GM12878 (cell line): ENCODE measurements at regions of chr13 and their contacts with region 1.

Region 1: GRCh38 chr13:62357887-62358645 is 942.4 kb upstream of the PCDH20 start:
- DNase-seq: peak; percentile 12
- ATAC-seq: peak; percentile 97
- H3K4me3 ChIP-seq: no peak overlapping the region
- H3K27ac ChIP-seq: no peak overlapping the region
- H3K4me1 ChIP-seq: no peaks in the 10 kb centered on the region
- H3K27me3 ChIP-seq: no peaks in the 10 kb centered on the region
- CTCF ChIP-seq: peak; percentile 66 to 79 (median 73)
- EP300 ChIP-seq: no peak
- POLR2A ChIP-seq: no peak
- RAD21 ChIP-seq: peak; percentile 94

Region 2: GRCh38 chr13:61410669-61411297 is 947.3 kb before region 1 on chr13:
- CTCF ChIA-PET with region 1: no interaction called
- POLR2A ChIA-PET with region 1: no interaction called
- RAD21 ChIA-PET with region 1: no interaction called
- SMC1A ChIA-PET with region 1: no interaction called
- in situ Hi-C with region 1: no loop called
- intact Hi-C with region 1: no loop called
- DNase-seq: no peak
- ATAC-seq: 0 out of 3 replicates have a peak, but pooled peaks have one; percentile 33
- H3K4me3 ChIP-seq: no peak overlapping the region
- H3K27ac ChIP-seq: no peak overlapping the region
- H3K4me1 ChIP-seq: no peaks in the 10 kb centered on the region
- H3K27me3 ChIP-seq: peaks cover 0 to 4% of the 10 kb centered on the region in 2 experiments; a peak in 1 of 4 replicates
- CTCF ChIP-seq: peak; percentile 35 to 54 (median 36); a peak in 5 of 6 replicates
- EP300 ChIP-seq: no peak
- POLR2A ChIP-seq: no peak
- RAD21 ChIP-seq: peak; percentile 60

Region 3: GRCh38 chr13:61880578-61881283 is 477.3 kb before region 1 on chr13:
- CTCF ChIA-PET with region 1: interaction called, 8 read pairs
- POLR2A ChIA-PET with region 1: no interaction called
- RAD21 ChIA-PET with region 1: interaction called, 4 read pairs
- SMC1A ChIA-PET with region 1: no interaction called
- in situ Hi-C with region 1: loop called (anchors 25 kb)
- intact Hi-C with region 1: loop called (anchors 1 kb)
- DNase-seq: no peak
- ATAC-seq: peak; percentile 98
- H3K4me3 ChIP-seq: no peak overlapping the region
- H3K27ac ChIP-seq: no peak overlapping the region
- H3K4me1 ChIP-seq: no peaks in the 10 kb centered on the region
- H3K27me3 ChIP-seq: no peaks in the 10 kb centered on the region
- CTCF ChIP-seq: peak; percentile 52 to 71 (median 52)
- EP300 ChIP-seq: no peak
- POLR2A ChIP-seq: no peak
- RAD21 ChIP-seq: peak; percentile 46

Region 4: DNA sequence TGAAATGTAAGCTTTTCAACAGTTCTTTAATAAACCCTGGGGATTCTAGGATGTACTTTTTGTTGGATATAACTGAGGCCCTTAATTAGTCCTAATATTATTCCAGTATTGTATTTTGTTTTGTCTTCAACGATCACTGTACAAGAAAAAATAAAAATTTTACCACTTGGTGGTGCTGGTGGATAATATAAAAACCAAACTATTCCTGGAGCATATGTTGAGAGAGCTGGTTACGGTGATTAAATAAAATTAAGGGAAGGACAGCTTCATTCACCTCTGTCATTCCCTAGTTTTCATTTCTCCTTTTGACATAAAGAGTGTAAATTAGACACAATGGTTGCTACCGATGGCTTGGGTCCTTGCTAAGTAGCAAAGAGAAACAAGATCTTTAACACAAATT is 343.8 kb before region 1 on chr13:
- CTCF ChIA-PET with region 1: no interaction called
- POLR2A ChIA-PET with region 1: no interaction called
- RAD21 ChIA-PET with region 1: no interaction called
- SMC1A ChIA-PET with region 1: interaction called, 4 read pairs
- in situ Hi-C with region 1: no loop called
- intact Hi-C with region 1: loop called (anchors 2 kb)
- DNase-seq: no peak
- ATAC-seq: no peak
- H3K4me3 ChIP-seq: no peak overlapping the region
- H3K27ac ChIP-seq: no peak overlapping the region
- H3K4me1 ChIP-seq: no peaks in the 10 kb centered on the region
- H3K27me3 ChIP-seq: no peaks in the 10 kb centered on the region; a peak in 1 of 4 replicates
- CTCF ChIP-seq: peak in 1 of 3 experiments; percentile 9; a peak in 2 of 6 replicates
- EP300 ChIP-seq: no peak
- POLR2A ChIP-seq: no peak
- RAD21 ChIP-seq: peak; percentile 41; the same call in 1 of the 2 replicates

Region 5: GRCh38 chr13:62320129-62321108 is 37.6 kb before region 1 on chr13:
- CTCF ChIA-PET with region 1: interaction called, 7 read pairs
- POLR2A ChIA-PET with region 1: no interaction called
- RAD21 ChIA-PET with region 1: interaction called, 3 read pairs
- SMC1A ChIA-PET with region 1: interaction called, 6 read pairs
- in situ Hi-C with region 1: no loop called
- intact Hi-C with region 1: loop called (anchors 1 kb)
- DNase-seq: peak; percentile 36
- ATAC-seq: peak; percentile 85
- H3K4me3 ChIP-seq: no peak overlapping the region
- H3K27ac ChIP-seq: no peak overlapping the region
- H3K4me1 ChIP-seq: no peaks in the 10 kb centered on the region
- H3K27me3 ChIP-seq: no peaks in the 10 kb centered on the region
- CTCF ChIP-seq: peak; percentile 50 to 66 (median 55); a peak in 5 of 6 replicates
- EP300 ChIP-seq: no peak
- POLR2A ChIP-seq: no peak
- RAD21 ChIP-seq: peak; percentile 92